Caco-2 (cell line): ENCODE measurements at regions of chr13 and their contacts with region 1.

Region 1: GRCh38 chr13:96771486-96772367 is 222.5 kb downstream of the OXGR1 start:
- DNase-seq: no peak
- H3K4me3 ChIP-seq: no peak overlapping the region
- H3K4me3 Mint-ChIP-seq: no peak overlapping the region
- H3K27ac Mint-ChIP-seq: no peak overlapping the region
- H3K4me1 ChIP-seq: no peaks in the 10 kb centered on the region
- H3K4me1 Mint-ChIP-seq: no peaks in the 10 kb centered on the region
- H3K27me3 ChIP-seq: no peaks in the 10 kb centered on the region
- H3K27me3 Mint-ChIP-seq: peaks cover 15% of the 10 kb centered on the region
- CTCF ChIP-seq: no peak

Region 2: DNA sequence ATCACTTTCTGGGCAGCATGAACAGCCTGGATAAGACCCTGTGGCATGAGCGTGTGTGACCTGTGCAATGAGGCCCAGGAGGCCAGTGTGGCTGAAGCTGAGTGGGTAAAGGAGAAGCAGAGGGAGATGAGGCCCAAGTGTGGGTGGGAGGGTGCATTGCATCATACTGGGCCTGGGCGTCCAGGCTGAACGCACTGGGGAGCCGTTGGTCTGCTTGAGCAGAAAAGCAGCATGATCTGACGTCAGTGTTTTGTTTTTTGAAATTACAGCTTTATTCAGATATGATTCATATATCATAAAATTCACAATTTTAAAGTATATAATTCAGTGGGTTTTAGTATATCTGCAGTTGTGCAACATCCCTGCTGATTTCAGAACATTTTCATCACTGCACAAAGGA is 272.1 kb before region 1 on chr13:
- CTCF ChIA-PET with region 1: interaction called, 10 read pairs
- POLR2A ChIA-PET with region 1: no interaction called
- intact Hi-C with region 1: no loop called
- DNase-seq: no peak
- H3K4me3 ChIP-seq: no peak overlapping the region
- H3K4me3 Mint-ChIP-seq: no peak overlapping the region
- H3K27ac Mint-ChIP-seq: peak overlapping the region; percentile 33
- H3K4me1 ChIP-seq: peaks cover 22% of the 10 kb centered on the region
- H3K4me1 Mint-ChIP-seq: peaks cover 17% of the 10 kb centered on the region
- H3K27me3 ChIP-seq: no peaks in the 10 kb centered on the region
- H3K27me3 Mint-ChIP-seq: no peaks in the 10 kb centered on the region
- CTCF ChIP-seq: no peak